Activated CD4-positive, alpha-beta memory T cell treated with anti-CD3 and anti-CD28 coated beads for 36 hours (primary cell): ENCODE measurements at regions of chr3 and their contacts with region 1.

Region 1: DNA sequence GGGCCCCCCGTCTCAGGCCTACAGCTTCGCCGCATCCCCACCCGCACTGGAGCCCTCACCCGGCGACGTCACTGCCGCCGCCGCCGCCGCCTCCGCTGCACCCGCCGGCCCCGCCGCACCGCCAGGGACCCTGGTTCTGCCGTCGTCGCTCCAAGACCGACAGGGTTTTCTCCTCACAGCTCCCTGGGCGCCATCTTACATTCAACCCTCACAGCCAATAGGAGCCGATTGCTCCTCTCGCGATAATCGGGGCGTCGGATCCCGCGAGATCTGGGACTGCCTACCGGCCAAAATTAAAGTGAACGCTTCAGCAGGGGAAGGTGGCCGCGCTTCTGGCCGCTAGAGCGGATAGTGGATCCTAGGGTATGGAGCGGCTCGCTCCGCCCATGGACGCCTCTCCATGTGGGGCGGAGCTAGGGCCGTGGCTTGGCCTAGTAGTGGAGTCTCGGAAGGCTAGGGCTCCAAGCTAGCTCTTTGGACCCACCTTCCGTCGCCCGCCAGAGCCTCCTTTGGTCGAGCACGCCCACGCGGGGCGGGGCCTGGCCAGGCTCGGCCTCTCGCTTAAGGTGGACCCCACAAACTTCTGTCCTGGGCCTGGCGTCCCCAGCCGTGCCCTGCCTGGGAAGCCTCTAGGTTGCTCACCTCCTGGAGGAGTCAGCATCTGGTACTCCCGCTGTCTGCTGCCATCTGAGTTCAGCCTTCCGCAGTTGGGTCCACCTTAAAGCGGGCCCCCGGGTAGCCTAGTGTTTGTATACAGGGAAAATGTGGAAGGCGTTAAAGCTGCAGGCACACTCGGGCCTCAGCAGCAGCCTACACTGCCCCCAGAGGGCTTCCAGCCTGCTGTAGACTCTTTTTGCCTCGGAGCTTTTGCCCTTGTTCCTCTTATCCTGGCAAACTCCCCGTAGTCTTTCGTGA is at the start of gene QRICH1:
- DNase-seq: peak; percentile 98
- H3K4me3 Mint-ChIP-seq: peak within 1 kb of the TSS; percentile 90
- H3K27ac Mint-ChIP-seq: peak within 1 kb of the TSS; percentile 95
- H3K4me1 Mint-ChIP-seq: peaks cover 35% of the 10 kb centered on the region
- H3K27me3 Mint-ChIP-seq: no peaks in the 10 kb centered on the region
- total RNA-seq, gene QRICH1: 124 to 128 TPM

Region 2: GRCh38 chr3:48847504-48848423 is 246.3 kb before region 1 on chr3 and contains the start of gene PRKAR2A:
- CTCF ChIA-PET with region 1: no interaction called
- POLR2A ChIA-PET with region 1: no interaction called
- intact Hi-C with region 1: loop called (anchors 5 kb)
- DNase-seq: peak; percentile 89
- H3K4me3 Mint-ChIP-seq: peak within 1 kb of the TSS; percentile 83
- H3K27ac Mint-ChIP-seq: peak within 1 kb of the TSS; percentile 89
- H3K4me1 Mint-ChIP-seq: peaks cover 28% of the 10 kb centered on the region
- H3K27me3 Mint-ChIP-seq: no peaks in the 10 kb centered on the region
- total RNA-seq, gene PRKAR2A: 30.4 to 32.7 TPM

Region 3: DNA sequence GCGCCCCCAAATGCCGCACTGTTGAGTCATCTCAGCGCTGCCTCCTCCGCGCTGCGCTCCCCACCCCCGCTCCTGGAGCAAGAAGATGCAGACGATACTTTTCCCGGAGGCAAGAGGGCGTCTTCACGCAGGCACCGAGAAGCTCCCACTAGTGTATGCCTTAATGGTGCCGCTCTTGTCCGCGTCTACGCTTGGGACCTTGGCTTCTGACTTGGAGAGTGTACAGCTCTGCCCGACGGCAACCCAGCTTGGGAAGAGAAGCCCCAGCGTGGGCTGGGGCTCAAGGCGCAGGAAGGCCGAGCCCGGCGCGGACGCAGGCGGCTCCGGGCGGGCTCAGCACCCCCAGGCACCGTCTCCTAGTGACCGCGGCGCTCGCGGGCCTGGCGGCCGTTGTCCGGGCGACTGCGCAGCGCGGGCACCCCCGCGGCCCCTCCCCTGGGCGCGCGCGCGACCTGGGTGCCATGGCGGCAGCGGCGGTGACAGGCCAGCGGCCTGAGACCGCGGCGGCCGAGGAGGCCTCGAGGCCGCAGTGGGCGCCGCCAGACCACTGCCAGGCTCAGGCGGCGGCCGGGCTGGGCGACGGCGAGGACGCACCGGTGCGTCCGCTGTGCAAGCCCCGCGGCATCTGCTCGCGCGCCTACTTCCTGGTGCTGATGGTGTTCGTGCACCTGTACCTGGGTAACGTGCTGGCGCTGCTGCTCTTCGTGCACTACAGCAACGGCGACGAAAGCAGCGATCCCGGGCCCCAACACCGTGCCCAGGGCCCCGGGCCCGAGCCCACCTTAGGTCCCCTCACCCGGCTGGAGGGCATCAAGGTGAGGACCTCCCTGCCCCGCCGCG is 104.1 kb before region 1 on chr3 and contains the start of gene P4HTM:
- CTCF ChIA-PET with region 1: interaction called, 22 read pairs
- POLR2A ChIA-PET with region 1: interaction called, 15 read pairs
- intact Hi-C with region 1: loop called (anchors 1 kb)
- DNase-seq: peak; percentile 88
- H3K4me3 Mint-ChIP-seq: peak within 1 kb of the TSS; percentile 95
- H3K27ac Mint-ChIP-seq: peak within 1 kb of the TSS; percentile 94
- H3K4me1 Mint-ChIP-seq: peaks cover 36% of the 10 kb centered on the region
- H3K27me3 Mint-ChIP-seq: no peaks in the 10 kb centered on the region
- total RNA-seq, gene P4HTM: 32.7 to 32.8 TPM

Region 4: GRCh38 chr3:49021813-49022687 is 72.1 kb before region 1 on chr3 and contains the start of gene NDUFAF3:
- CTCF ChIA-PET with region 1: interaction called, 27 read pairs
- POLR2A ChIA-PET with region 1: interaction called, 34 read pairs
- intact Hi-C with region 1: loop called (anchors 1 kb)
- DNase-seq: peak; percentile 96
- H3K4me3 Mint-ChIP-seq: peak within 1 kb of the TSS; percentile 97
- H3K27ac Mint-ChIP-seq: peak within 1 kb of the TSS; percentile 98
- H3K4me1 Mint-ChIP-seq: peaks cover 56% of the 10 kb centered on the region
- H3K27me3 Mint-ChIP-seq: no peaks in the 10 kb centered on the region
- total RNA-seq, gene NDUFAF3: 101 to 106 TPM

Region 5: GRCh38 chr3:49104483-49105291 is 10.6 kb after region 1 on chr3 and contains the start of gene QARS1:
- CTCF ChIA-PET with region 1: interaction called, 6 read pairs
- POLR2A ChIA-PET with region 1: interaction called, 37 read pairs
- intact Hi-C with region 1: loop called (anchors 1 kb)
- DNase-seq: peak; percentile 94
- H3K4me3 Mint-ChIP-seq: peak within 1 kb of the TSS; percentile 99
- H3K27ac Mint-ChIP-seq: peak within 1 kb of the TSS; percentile 87
- H3K4me1 Mint-ChIP-seq: peaks cover 22% of the 10 kb centered on the region
- H3K27me3 Mint-ChIP-seq: no peaks in the 10 kb centered on the region
- total RNA-seq, gene QARS1: 249 to 286 TPM

Region 6: GRCh38 chr3:49158108-49158709 is 64.1 kb after region 1 on chr3:
- CTCF ChIA-PET with region 1: interaction called, 15 read pairs
- POLR2A ChIA-PET with region 1: no interaction called
- intact Hi-C with region 1: loop called (anchors 2 kb)
- DNase-seq: peak; percentile 78
- H3K4me3 Mint-ChIP-seq: no peak overlapping the region
- H3K27ac Mint-ChIP-seq: no peak overlapping the region
- H3K4me1 Mint-ChIP-seq: peaks cover 5% of the 10 kb centered on the region
- H3K27me3 Mint-ChIP-seq: no peaks in the 10 kb centered on the region

Region 7: DNA sequence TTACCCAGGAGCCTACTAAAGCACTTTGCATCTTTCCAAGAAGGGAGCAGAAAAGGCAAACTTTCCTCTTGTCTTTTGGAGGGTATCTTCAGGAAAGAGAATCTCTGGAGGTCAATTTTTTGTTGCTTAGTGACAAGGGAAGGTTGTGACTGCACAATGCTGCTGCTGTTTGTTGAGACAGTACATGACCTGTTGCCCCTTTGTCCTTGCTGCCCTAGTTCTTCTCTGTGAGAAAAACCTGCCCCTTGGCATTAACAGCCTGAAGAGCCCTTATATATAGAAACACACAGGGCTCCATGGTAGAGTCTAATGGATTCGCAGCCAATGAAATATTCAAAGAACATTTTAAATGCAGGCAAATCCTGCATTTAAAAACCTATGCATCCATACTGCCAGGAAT is 97.6 kb after region 1 on chr3:
- CTCF ChIA-PET with region 1: no interaction called
- POLR2A ChIA-PET with region 1: no interaction called
- intact Hi-C with region 1: no loop called
- DNase-seq: no peak
- H3K4me3 Mint-ChIP-seq: no peak overlapping the region
- H3K27ac Mint-ChIP-seq: no peak overlapping the region
- H3K4me1 Mint-ChIP-seq: no peaks in the 10 kb centered on the region
- H3K27me3 Mint-ChIP-seq: peaks cover 1% of the 10 kb centered on the region

Region 8: DNA sequence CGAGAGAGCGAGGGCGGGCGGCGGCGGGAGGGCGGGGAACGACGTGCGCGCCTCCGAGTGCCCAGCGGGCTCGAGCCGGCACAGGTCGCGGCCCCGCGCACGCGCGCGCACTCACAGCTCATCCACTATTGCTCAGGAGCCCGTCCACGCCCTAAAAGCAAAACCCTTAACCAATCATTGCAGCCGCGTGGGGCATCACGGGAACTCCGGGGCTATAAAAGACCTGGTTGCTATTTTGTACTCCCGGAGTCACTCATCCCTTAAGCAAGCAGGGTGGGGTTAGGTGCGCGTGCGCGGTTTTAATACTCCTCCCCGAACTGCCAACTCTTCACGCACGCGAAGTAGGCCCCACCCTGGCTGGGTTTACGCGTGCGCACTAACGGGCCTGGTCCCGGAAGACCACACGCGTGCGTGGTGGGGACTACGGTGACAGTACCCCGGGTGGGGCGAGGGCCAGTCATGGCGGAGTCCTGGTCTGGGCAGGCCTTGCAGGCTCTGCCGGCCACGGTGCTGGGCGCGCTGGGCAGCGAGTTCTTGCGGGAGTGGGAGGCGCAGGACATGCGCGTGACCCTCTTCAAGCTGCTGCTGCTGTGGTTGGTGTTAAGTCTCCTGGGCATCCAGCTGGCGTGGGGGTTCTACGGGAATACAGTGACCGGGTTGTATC is 318.0 kb after region 1 on chr3 and contains the starts of genes RHOA and TCTA:
- CTCF ChIA-PET with region 1: interaction called, 3 read pairs
- POLR2A ChIA-PET with region 1: interaction called, 7 read pairs
- intact Hi-C with region 1: loop called (anchors 1 kb)
- DNase-seq: peak; percentile 99
- H3K4me3 Mint-ChIP-seq: peak within 1 kb of the TSS; percentile 90
- H3K27ac Mint-ChIP-seq: peak within 1 kb of the TSS; percentile 95
- H3K4me1 Mint-ChIP-seq: peaks cover 63% of the 10 kb centered on the region
- H3K27me3 Mint-ChIP-seq: no peaks in the 10 kb centered on the region
- total RNA-seq, gene RHOA: 497 to 514 TPM
- total RNA-seq, gene TCTA: 9.5 to 10.9 TPM